BJ (cell line): ENCODE measurements at regions of chr17 and their contacts with region 1.

Region 1: GRCh38 chr17:50560185-50560824 is at the start of gene CACNA1G:
- DNase-seq: peak; percentile 25
- H3K4me3 ChIP-seq: peak within 1 kb of the TSS; percentile 37
- H3K27me3 ChIP-seq: peaks cover 40% of the 10 kb centered on the region
- CTCF ChIP-seq: no peak
- polyA plus RNA-seq, gene CACNA1G: 0.01 and 0.02 TPM in 2 replicates

Region 2: GRCh38 chr17:50272711-50273653 is 287.3 kb before region 1 on chr17:
- CTCF ChIA-PET with region 1: no interaction called
- POLR2A ChIA-PET with region 1: no interaction called
- DNase-seq: no peak
- H3K4me3 ChIP-seq: peak overlapping the region; percentile 51
- H3K27me3 ChIP-seq: no peaks in the 10 kb centered on the region
- CTCF ChIP-seq: peak; percentile 34; the same call in 1 of the 2 replicates

Region 3: GRCh38 chr17:50691545-50692447 is 131.5 kb after region 1 on chr17:
- CTCF ChIA-PET with region 1: interaction called, 34 read pairs
- POLR2A ChIA-PET with region 1: no interaction called
- DNase-seq: no peak
- H3K4me3 ChIP-seq: no peak overlapping the region
- H3K27me3 ChIP-seq: no peaks in the 10 kb centered on the region
- CTCF ChIP-seq: no peak